Activated CD8-positive, alpha-beta T cell treated with anti-CD3 and anti-CD28 coated beads for 36 hours (primary cell): ENCODE measurements at regions of chr4 and their contacts with region 1.

Region 1: GRCh38 chr4:142282870-142283431 is 563.1 kb downstream of the INPP4B start:
- DNase-seq: peak; percentile 22
- ATAC-seq: peak; percentile 38
- H3K4me3 Mint-ChIP-seq: no peak overlapping the region
- H3K27ac Mint-ChIP-seq: no peak overlapping the region
- H3K4me1 Mint-ChIP-seq: peaks cover 18% of the 10 kb centered on the region
- H3K27me3 Mint-ChIP-seq: no peaks in the 10 kb centered on the region
- CTCF ChIP-seq: peak; percentile 93

Region 2: DNA sequence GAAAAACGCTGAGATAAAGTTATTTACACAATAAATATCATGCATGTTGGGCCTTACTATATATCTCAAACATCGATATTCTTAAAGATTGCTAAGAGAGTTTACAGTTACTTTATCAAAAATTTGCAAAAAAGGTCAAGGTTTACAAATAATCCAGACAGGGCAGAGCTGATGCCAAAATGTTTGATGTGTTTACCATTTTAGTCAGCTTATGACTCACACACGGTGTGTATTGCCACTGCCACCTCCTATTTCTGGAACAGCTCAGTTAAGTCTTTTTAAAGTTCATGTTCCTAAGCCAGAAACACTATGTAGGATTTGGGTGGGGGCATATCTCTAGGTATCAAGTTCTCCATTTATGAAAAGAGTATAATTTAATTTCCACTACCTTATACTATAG is 17.4 kb before region 1 on chr4:
- CTCF ChIA-PET with region 1: interaction called, 39 read pairs
- POLR2A ChIA-PET with region 1: interaction called, 4 read pairs
- intact Hi-C with region 1: no loop called
- DNase-seq: peak; percentile 23
- ATAC-seq: peak; percentile 92
- H3K4me3 Mint-ChIP-seq: no peak overlapping the region
- H3K27ac Mint-ChIP-seq: peak overlapping the region; percentile 75
- H3K4me1 Mint-ChIP-seq: peaks cover 71% of the 10 kb centered on the region
- H3K27me3 Mint-ChIP-seq: no peaks in the 10 kb centered on the region
- CTCF ChIP-seq: no peak

Region 3: DNA sequence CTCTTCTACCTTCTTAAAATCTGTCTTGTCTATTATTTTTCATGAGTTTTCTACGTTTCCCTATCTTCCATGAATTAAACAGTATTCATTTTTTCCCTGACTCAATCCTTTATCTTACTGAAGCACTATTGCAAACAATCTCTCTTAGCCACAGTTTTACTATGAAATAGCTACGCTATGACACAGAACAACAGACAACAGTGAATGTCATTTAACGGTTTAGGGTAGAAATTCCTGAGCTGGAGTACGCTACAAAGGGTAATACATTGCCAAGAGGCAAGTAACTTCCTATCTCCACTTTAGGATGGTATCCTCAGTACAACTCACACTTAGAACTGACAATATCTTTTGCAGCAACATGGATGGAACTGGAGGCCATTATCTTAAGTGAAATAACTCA is 10.6 kb after region 1 on chr4:
- CTCF ChIA-PET with region 1: interaction called, 13 read pairs
- POLR2A ChIA-PET with region 1: interaction called, 3 read pairs
- intact Hi-C with region 1: no loop called
- DNase-seq: no peak
- ATAC-seq: no peak
- H3K4me3 Mint-ChIP-seq: no peak overlapping the region
- H3K27ac Mint-ChIP-seq: no peak overlapping the region
- H3K4me1 Mint-ChIP-seq: peaks cover 43% of the 10 kb centered on the region
- H3K27me3 Mint-ChIP-seq: no peaks in the 10 kb centered on the region
- CTCF ChIP-seq: no peak

Region 4: GRCh38 chr4:142307857-142308256 is 24.9 kb after region 1 on chr4:
- CTCF ChIA-PET with region 1: interaction called, 14 read pairs
- POLR2A ChIA-PET with region 1: no interaction called
- intact Hi-C with region 1: no loop called
- DNase-seq: no peak
- ATAC-seq: no peak
- H3K4me3 Mint-ChIP-seq: no peak overlapping the region
- H3K27ac Mint-ChIP-seq: no peak overlapping the region
- H3K4me1 Mint-ChIP-seq: peaks cover 14% of the 10 kb centered on the region
- H3K27me3 Mint-ChIP-seq: no peaks in the 10 kb centered on the region
- CTCF ChIP-seq: no peak

Region 5: GRCh38 chr4:142846729-142847596 is 564.0 kb after region 1 on chr4:
- CTCF ChIA-PET with region 1: interaction called, 4 read pairs
- POLR2A ChIA-PET with region 1: no interaction called
- intact Hi-C with region 1: loop called (anchors 10 kb)
- DNase-seq: peak; percentile 83
- ATAC-seq: peak; percentile 84
- H3K4me3 Mint-ChIP-seq: peak overlapping the region; percentile 83
- H3K27ac Mint-ChIP-seq: no peak overlapping the region
- H3K4me1 Mint-ChIP-seq: peaks cover 5% of the 10 kb centered on the region
- H3K27me3 Mint-ChIP-seq: peaks cover 26% of the 10 kb centered on the region
- CTCF ChIP-seq: peak; percentile 62

Region 6: DNA sequence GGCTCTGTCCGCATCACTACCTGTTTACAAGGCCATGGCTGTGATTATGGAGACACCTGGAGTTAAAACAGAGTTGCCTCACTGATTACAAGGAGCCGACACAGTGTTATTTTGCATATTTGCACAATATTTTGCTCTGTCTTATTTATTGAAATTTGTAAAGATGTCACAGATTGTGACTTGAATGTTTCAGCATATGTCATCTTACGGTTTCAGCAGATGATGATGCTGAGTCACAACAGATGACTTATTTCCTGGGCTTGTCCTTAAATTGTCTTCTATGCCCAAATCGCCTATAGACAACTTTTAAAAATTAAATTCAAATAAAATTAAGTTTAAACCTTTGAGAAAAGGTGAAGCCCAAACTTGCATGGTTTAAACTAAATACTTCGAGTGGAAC is 650.3 kb after region 1 on chr4:
- CTCF ChIA-PET with region 1: no interaction called
- POLR2A ChIA-PET with region 1: no interaction called
- intact Hi-C with region 1: no loop called
- DNase-seq: no peak
- ATAC-seq: no peak
- H3K4me3 Mint-ChIP-seq: no peak overlapping the region
- H3K27ac Mint-ChIP-seq: no peak overlapping the region
- H3K4me1 Mint-ChIP-seq: no peaks in the 10 kb centered on the region
- H3K27me3 Mint-ChIP-seq: no peaks in the 10 kb centered on the region
- CTCF ChIP-seq: no peak